Activated CD4-positive, alpha-beta T cell treated with anti-CD3 and anti-CD28 coated beads for 36 hours (primary cell): ENCODE measurements at regions of chr1 and their contacts with region 1.

Region 1: GRCh38 chr1:25232027-25232865 is at the start of gene SYF2:
- DNase-seq: peak; percentile 92
- ATAC-seq: peak; percentile 92
- H3K4me3 Mint-ChIP-seq: no peak within 1 kb of the TSS
- H3K27ac Mint-ChIP-seq: no peak within 1 kb of the TSS
- H3K4me1 Mint-ChIP-seq: peaks cover 26% of the 10 kb centered on the region
- H3K27me3 Mint-ChIP-seq: no peaks in the 10 kb centered on the region
- total RNA-seq, gene SYF2: 39.0 to 42.4 TPM

Region 2: GRCh38 chr1:25247024-25247828 is 15.0 kb after region 1 on chr1 and contains the start of gene RSRP1:
- CTCF ChIA-PET with region 1: interaction called, 14 read pairs
- POLR2A ChIA-PET with region 1: interaction called, 37 read pairs
- intact Hi-C with region 1: loop called (anchors 1 kb)
- DNase-seq: peak; percentile 100
- ATAC-seq: peak; percentile 90
- H3K4me3 Mint-ChIP-seq: peak within 1 kb of the TSS; percentile 96
- H3K27ac Mint-ChIP-seq: peak within 1 kb of the TSS; percentile 99
- H3K4me1 Mint-ChIP-seq: peaks cover 40% of the 10 kb centered on the region
- H3K27me3 Mint-ChIP-seq: no peaks in the 10 kb centered on the region
- total RNA-seq, gene RSRP1: 86.8 to 120 TPM